Lower leg skin (tissue), 4 donors: ENCODE measurements at regions of chr1 and their contacts with region 1.

Region 1: GRCh38 chr1:153796791-153797659 is 21.8 kb downstream of the SLC27A3 start:
- DNase-seq: peak; percentile 89 to 96
- H3K4me3 ChIP-seq: no peak overlapping the region
- CTCF ChIP-seq: peak in 1 of 3 donors; percentile 68
- POLR2A ChIP-seq: no peak

Region 2: DNA sequence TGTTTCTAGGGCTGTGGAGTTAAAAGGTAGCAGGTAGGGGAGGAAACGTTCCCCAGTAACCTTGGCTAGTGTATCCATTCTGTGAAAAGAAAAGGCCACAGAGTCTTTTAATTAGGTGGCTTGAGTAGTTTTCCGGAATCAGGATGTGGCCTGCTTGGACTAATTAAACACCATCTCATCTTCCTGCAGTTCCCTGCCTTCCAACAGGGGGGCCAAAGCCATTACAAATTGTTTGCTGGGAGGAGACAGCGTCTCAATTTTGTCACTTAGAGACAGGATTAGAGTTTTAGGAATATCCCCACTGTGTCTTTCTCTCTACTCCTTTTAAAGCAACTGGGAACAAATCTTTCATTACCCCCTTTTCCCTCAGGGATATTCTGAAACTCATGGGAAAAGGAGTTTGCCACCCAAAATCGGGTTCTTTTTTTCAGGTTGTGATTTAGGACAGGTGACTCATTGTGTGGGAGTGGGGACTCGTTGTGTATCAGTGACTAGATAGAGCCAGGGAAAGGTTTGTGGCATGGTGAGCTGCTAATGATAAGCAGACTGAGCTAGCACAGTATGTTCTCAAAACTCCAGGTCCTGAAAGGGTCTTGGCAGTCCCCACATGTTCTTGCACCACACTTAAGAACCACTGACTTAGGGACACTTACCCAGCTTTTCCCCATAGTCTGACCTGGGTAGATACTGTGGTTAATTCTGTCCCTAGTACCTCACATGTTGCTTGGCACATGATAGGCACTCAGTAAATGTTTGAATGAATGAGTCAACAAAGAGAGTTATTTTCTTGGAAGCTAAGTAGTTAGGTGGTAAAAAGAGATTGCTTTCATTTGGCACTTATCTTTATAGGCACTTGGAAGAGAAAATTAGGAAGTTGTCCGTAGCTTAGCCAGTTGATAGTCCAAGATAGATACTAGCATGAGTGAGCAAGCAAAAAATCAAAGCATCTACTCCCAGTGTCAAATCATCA is 46.7 kb before region 1 on chr1:
- intact Hi-C with region 1: no loop called
- DNase-seq: peak in 1 of 2 donors; percentile 66
- H3K4me3 ChIP-seq: no peak overlapping the region
- CTCF ChIP-seq: no peak
- POLR2A ChIP-seq: no peak

Region 3: GRCh38 chr1:153888533-153888932 is 91.5 kb after region 1 on chr1:
- intact Hi-C with region 1: no loop called
- DNase-seq: no peak
- H3K4me3 ChIP-seq: no peak overlapping the region
- CTCF ChIP-seq: no peak
- POLR2A ChIP-seq: no peak

Region 4: DNA sequence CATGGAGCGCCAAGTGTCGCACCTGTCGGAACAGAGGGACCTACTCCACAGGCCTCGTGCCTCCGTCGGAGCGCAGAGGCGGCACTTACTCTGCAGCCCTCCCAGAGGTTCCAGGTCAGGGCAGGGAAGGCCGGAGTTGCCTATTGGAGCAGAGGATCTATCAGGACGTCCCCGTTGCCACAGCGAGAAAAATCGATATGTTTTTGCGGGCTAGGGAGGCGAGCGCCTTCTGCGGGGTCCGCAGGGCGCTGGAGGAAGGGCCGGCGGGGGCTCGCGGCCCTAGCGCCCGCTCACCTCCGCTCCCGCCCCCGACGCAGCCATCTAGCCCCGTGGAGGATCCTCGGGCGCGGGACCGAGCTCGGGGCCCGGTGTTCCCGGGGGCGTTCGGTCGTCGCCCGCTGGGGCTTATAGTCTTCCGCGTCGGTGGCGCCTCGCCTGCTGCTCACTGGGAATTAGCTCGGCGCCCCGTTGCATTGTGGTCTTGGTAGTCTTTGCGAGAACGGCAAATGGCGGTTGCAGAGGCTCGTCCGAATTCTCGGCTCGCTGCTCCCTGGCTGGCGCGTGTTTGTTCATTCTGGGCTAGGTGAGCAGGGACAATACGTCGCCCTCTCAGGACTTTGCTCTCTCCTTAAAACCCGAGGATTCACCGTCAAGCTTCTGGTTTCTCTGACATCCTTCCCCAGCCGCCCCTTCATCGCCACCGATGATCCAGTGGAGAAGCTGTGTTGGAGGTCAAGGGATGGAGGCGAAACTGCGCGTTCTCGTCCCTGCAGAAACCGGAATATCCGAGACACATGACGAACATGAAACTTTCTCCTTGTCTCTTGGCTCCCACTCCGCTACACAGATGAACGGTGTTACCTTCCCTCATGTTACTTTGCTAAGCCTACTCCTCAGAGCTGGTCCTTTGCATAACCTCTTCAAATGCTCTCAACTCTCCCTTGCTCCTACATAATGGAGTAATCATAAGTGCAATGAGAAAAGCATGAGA is 180.5 kb after region 1 on chr1 and contains the start of gene JTB:
- intact Hi-C with region 1: loop called (anchors 5 kb)
- DNase-seq: peak; percentile 88 to 98
- H3K4me3 ChIP-seq: peak within 1 kb of the TSS; percentile 87
- CTCF ChIP-seq: no peak
- POLR2A ChIP-seq: peak in 1 of 2 donors; percentile 82
- total RNA-seq, gene JTB: 179 to 218 (median 201) TPM